Transverse colon (tissue), 4 donors: ENCODE measurements at regions of chr11 and their contacts with region 1.

Region 1: GRCh38 chr11:22780952-22781593 is 48.5 kb downstream of the SVIP start:
- DNase-seq: no peak
- H3K4me3 ChIP-seq: no peak overlapping the region
- H3K27ac ChIP-seq: no peak overlapping the region
- H3K4me1 ChIP-seq: no peaks in the 10 kb centered on the region
- H3K27me3 ChIP-seq: no peaks in the 10 kb centered on the region
- CTCF ChIP-seq: no peak
- EP300 ChIP-seq: no peak
- POLR2A ChIP-seq: no peak

Region 2: DNA sequence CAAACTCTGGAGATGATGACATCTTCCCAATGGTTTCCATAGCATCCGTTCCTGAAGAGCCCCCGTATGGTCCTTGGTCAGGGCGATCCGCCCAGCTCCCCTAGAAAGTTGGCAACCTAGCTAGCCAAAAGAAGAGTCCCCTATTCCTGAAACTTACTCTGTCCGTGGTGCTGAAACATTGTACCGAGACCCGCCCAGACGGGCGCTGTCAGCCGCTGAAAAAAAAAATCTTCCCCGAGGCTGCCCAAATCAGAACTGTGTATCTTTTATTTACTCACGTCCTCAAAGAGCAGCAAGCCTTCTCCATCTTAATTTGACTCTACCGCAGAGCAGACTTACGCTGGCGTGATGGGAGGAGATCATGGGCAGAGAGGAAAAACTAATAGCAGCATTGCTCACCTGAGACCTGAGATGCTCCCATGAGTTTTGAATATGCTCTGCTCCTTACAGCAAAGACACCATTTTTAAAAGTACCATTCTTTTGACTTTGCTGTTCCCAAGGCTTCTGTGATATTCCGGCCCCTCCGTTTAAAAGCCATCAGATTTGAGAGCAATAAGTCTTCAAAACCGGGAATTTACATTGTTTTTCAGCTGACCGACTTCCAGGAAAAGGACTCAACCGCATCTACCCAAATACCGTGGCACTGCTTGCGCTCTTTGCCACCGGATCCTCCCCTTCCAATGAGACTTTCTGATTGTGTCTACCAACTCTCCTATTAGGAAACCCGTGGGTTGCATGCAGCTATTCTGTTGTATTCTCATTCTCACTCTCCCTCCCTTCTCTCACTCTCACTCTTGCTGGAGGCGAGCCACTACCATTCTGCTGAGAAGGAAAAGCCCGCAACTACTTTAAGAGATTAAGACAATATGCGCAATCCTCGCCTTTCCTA is 443.2 kb before region 1 on chr11 and contains the start of gene SLC17A6:
- in situ Hi-C with region 1: loop called in 3 of 4 experiments (anchors 5 to 25 kb)
- intact Hi-C with region 1: loop called (anchors 5 kb)
- DNase-seq: no peak
- H3K4me3 ChIP-seq: no peak within 1 kb of the TSS
- H3K27ac ChIP-seq: no peak within 1 kb of the TSS
- H3K4me1 ChIP-seq: no peaks in the 10 kb centered on the region
- H3K27me3 ChIP-seq: peaks cover 63% of the 10 kb centered on the region
- CTCF ChIP-seq: no peak
- EP300 ChIP-seq: no peak
- POLR2A ChIP-seq: no peak
- total RNA-seq, gene SLC17A6: not detected